ENCODE measurements at regions of chr4 and their contacts with region 1.

Region 1: GRCh38 chr4:89836897-89837384 is at the start of gene SNCA:
- DNase-seq: peak; percentile 20
- H3K4me3 Mint-ChIP-seq: peak within 1 kb of the TSS; percentile 70
- H3K27ac Mint-ChIP-seq: no peak within 1 kb of the TSS
- H3K4me1 Mint-ChIP-seq: peaks cover 20% of the 10 kb centered on the region
- H3K27me3 Mint-ChIP-seq: peaks cover 67% of the 10 kb centered on the region
- total RNA-seq, gene SNCA: 0.39 and 0.44 TPM in 2 replicates

Region 2: DNA sequence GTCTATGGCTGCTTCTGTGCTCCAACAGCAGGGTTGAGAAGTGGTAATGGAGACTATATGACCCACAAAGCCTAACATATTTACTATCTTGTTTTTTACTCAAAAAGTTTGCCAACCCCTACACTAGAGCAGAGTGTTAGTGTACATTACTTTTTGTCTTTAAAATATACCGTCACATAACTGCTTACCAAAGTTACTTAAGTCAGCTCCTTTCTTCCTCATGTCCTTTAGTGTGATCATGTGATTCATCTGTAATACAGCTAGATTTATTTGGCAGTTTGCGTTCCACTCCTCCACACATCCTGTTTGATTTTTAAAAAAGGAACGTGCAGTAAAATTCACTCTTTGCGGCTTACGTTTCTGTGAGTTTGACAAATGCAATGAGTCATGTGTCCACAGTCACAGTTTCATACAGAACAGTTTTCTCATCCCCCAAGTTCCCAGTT is 367.0 kb before region 1 on chr4:
- intact Hi-C with region 1: loop called (anchors 10 kb)
- DNase-seq: peak; percentile 19
- H3K4me3 Mint-ChIP-seq: no peak overlapping the region
- H3K27ac Mint-ChIP-seq: peak overlapping the region; percentile 80
- H3K4me1 Mint-ChIP-seq: peaks cover 21% of the 10 kb centered on the region
- H3K27me3 Mint-ChIP-seq: no peaks in the 10 kb centered on the region

Region 3: DNA sequence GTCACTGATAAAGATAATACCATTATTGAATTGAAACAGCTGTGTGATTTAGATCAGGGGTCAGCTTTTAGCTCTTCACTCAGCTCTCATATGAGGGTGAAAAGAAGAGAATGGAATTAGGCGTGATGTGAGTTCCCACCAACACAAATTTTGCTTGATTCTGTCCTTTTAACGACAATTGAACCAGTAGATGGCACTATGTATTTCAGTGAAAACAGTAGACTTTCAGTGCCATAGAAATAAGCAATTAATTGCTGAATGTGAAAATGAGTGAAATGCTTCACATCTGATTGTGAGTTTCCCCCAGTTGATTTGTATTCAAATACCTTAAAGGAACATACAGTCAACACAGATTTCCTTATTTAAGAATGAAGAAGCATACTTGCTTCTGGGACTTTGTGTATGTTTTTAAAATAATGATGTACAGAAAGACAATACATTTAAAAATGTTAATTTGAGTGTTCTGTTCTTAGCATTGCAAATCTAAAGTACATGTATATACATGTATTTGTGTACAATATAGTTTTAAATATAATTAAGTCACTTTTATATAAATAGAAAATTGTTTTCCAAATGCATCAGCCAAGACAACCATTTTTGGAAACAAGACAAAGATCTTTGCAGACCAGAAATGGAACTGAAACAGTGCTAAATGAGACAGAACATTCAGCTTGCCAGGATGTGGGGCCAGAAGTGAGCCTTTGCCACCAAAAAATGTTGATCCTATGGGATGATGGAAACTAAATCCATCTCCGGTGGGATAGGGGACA is 178.8 kb before region 1 on chr4:
- intact Hi-C with region 1: loop called (anchors 5 kb)
- DNase-seq: no peak
- H3K4me3 Mint-ChIP-seq: no peak overlapping the region
- H3K27ac Mint-ChIP-seq: no peak overlapping the region
- H3K4me1 Mint-ChIP-seq: peaks cover 2% of the 10 kb centered on the region
- H3K27me3 Mint-ChIP-seq: peaks cover 25% of the 10 kb centered on the region

Region 4: GRCh38 chr4:89788206-89789072 is 48.5 kb before region 1 on chr4:
- intact Hi-C with region 1: no loop called
- DNase-seq: no peak
- H3K4me3 Mint-ChIP-seq: no peak overlapping the region
- H3K27ac Mint-ChIP-seq: no peak overlapping the region
- H3K4me1 Mint-ChIP-seq: no peaks in the 10 kb centered on the region
- H3K27me3 Mint-ChIP-seq: no peaks in the 10 kb centered on the region

Region 5: GRCh38 chr4:89894649-89895550 is 58.0 kb after region 1 on chr4 and contains the start of gene MMRN1:
- intact Hi-C with region 1: loop called (anchors 5 kb)
- DNase-seq: no peak
- H3K4me3 Mint-ChIP-seq: no peak within 1 kb of the TSS
- H3K27ac Mint-ChIP-seq: no peak within 1 kb of the TSS
- H3K4me1 Mint-ChIP-seq: peaks cover 14% of the 10 kb centered on the region
- H3K27me3 Mint-ChIP-seq: peaks cover 7% of the 10 kb centered on the region
- total RNA-seq, gene MMRN1: not detected in 2 replicates

Region 6: DNA sequence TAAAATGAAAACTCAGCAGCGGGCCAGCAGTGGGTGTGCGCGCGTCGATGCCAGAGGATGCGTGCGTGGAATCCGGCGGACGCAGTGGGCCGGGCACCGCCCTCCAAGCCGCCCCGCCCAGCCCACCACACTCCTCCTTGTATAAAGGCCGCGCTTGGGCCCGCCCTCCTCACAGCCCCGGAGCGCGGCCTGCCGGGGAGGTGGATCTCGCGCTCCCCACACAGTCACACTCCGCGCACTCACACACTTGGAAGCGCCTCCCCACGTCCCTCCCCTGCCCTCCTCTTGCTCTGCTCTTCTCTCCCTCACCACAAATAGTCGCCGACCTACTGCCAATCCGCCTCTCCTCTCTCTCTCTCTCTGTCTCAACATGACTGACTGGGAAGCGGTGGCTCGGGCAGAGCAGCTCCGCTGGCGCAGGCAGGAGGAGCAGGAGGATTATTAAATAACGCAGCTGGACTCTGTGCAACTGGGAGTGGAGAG is 290.3 kb after region 1 on chr4 and contains the start of gene CCSER1:
- intact Hi-C with region 1: loop called (anchors 5 kb)
- DNase-seq: no peak
- H3K4me3 Mint-ChIP-seq: peak within 1 kb of the TSS; percentile 59
- H3K27ac Mint-ChIP-seq: no peak within 1 kb of the TSS
- H3K4me1 Mint-ChIP-seq: peaks cover 13% of the 10 kb centered on the region
- H3K27me3 Mint-ChIP-seq: peaks cover 41% of the 10 kb centered on the region
- total RNA-seq, gene CCSER1: not detected in 2 replicates